ENCODE measurements at regions of chr12 and their contacts with region 1.

Region 1: GRCh38 chr12:56724972-56725722 is at the start of gene NACA:
- H3K4me3 ChIP-seq: peak within 1 kb of the TSS; percentile 73
- H3K27ac ChIP-seq: peak within 1 kb of the TSS; percentile 99
- H3K4me1 ChIP-seq: peaks cover 7% of the 10 kb centered on the region; the same call in 1 of the 2 replicates
- CTCF ChIP-seq: peak; percentile 12; the same call in 1 of the 2 replicates

Region 2: GRCh38 chr12:56645717-56646446 is 79.3 kb before region 1 on chr12 and contains the start of gene ATP5F1B:
- CTCF ChIA-PET with region 1: interaction called, 3 read pairs
- POLR2A ChIA-PET with region 1: interaction called, 11 read pairs
- H3K4me3 ChIP-seq: peak within 1 kb of the TSS; percentile 64
- H3K27ac ChIP-seq: peak within 1 kb of the TSS; percentile 82
- H3K4me1 ChIP-seq: 0 out of 2 replicates have a peak, but pooled peaks cover 2% of the 10 kb centered on the region
- CTCF ChIP-seq: no peak

Region 3: DNA sequence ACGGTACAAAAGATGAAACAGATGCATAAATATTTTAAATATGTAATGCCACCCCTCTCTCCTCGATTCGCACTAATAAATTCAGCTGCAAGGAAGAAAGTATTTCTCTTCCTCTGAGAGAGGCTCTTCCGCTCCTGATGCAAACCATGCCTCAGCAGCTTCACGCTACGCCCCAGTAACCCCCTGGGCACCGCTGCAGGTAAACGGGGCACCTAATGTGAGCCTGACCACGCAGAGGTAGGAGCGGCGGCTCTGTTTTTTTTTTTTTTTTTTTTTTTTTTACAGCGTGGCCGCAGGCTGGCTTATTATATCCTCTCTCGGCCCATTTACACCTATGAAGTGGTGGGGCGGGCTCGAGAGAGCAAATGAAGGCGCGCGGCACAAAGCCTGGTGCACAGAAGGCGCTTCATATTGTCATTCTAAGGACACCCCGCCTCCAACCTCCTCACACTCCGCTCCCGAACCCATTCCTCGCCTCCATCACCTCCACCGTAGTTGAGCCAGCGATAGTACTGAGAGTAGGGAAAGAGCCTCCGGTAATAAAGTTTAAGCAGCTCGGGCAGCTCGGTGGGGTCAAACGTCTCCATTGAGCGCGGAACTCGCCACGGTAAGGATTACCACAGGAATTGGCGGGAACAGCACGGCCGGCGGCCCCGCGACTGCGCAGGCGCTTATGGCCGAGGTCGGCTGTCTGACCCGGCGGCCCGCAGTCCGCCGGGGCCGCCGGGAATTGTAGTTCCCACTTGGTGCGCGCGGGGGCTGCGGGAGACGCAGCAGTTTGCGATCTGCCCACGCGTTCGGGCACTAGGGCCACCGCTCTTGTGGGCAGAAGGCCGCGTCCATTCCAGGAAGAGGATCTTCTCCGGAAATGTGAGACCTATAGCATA is 26.8 kb after region 1 on chr12 and contains the start of gene PRIM1:
- CTCF ChIA-PET with region 1: interaction called, 4 read pairs
- POLR2A ChIA-PET with region 1: interaction called, 13 read pairs
- H3K4me3 ChIP-seq: peak within 1 kb of the TSS; percentile 83
- H3K27ac ChIP-seq: peak within 1 kb of the TSS; percentile 80
- H3K4me1 ChIP-seq: peaks cover 6% of the 10 kb centered on the region
- CTCF ChIP-seq: 0 out of 2 replicates have a peak, but pooled peaks have one; percentile 12